ENCODE measurements at regions of chr7 and their contacts with region 1.

Region 1: DNA sequence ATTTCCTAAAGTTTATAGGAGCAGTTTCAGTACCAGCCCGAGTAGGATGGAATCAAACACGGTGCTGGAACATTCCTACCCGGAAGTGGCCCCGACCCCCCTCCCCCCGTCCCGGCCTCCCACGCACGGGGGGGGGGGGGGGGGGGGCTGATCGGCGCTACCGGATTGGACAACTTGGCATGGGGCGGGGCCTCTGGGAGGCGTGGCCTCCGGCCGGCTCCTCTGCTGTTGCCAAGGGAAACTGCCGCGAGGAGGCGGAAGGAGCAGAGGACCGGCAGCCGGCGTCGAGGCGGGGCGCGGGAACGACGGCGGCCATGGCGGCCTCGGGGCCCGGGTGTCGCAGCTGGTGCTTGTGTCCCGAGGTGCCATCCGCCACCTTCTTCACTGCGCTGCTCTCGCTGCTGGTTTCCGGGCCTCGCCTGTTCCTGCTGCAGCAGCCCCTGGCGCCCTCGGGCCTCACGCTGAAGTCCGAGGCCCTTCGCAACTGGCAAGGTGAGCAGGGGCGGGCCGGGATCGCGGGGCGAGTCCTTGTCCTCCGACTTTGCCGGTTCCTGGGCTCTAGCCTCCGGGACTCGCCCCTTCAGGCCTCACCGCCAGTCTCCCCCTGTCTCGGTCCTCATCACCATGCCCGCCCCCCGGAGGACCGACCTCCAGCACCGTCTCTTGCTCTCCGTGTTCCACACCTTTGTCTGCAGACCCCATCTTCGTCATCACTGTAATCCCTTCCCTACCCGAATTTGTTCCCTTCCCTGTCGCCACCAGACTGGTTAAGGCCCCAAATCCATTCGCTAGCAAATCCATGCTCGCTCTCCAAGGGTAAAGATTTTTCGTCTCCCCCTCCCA is at the start of gene RHBDD2:
- DNase-seq: peak; percentile 97
- H3K4me3 ChIP-seq: peak within 1 kb of the TSS; percentile 85
- H3K27ac ChIP-seq: peak within 1 kb of the TSS; percentile 43
- H3K4me1 ChIP-seq: peaks cover 18% of the 10 kb centered on the region
- CTCF ChIP-seq: no peak
- total RNA-seq, gene RHBDD2: 10.9 and 20.3 TPM in 2 replicates

Region 2: DNA sequence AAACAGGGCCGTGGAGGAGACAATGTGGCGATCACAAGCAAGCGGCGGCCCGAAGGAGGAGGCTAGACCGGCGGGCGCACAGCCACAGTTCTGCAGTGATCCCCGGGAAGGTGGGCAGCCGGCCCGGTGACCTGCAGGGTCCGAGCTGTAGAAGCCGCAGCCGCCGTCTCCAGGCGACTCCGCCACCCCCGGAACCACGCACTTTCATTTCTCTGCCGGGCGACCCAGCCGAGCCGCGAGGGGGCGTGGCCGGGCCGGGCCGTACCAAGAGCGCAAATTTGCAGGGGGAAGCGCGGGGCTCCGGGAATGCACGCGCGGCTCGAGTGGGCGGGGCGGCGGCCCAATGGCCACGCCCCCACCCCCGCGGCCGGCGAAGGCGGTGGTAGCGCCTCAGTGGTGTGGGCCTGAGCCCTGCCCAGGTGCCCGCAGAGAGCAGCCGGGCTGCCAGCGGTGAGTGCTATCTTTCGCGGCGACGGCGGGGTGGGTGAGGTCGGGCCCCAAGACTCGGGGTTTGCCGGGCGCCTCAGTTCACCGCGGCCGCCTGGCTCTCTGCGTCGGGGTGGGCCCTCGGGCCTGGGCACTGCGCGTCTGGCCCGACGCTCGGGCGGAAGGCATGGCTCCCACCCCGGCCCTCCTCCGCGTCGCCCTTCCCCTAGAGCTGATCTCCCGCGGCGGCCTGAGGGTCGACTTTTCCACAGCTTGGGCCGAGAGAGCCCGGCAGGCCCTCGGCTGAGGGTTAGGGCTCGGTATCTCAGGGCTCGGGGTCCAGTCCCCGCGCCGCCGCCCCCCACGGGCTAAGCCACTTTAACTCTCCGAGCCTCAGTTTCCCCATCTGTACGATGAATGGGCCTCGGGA is 36.0 kb after region 1 on chr7 and contains the start of gene POR:
- CTCF ChIA-PET with region 1: no interaction called
- POLR2A ChIA-PET with region 1: interaction called, 4 read pairs
- intact Hi-C with region 1: loop called (anchors 1 kb)
- DNase-seq: peak; percentile 93
- H3K4me3 ChIP-seq: peak within 1 kb of the TSS; percentile 98
- H3K27ac ChIP-seq: peak within 1 kb of the TSS; percentile 31
- H3K4me1 ChIP-seq: peaks cover 14% of the 10 kb centered on the region
- CTCF ChIP-seq: no peak
- total RNA-seq, gene POR: 30.8 and 41.5 TPM in 2 replicates

Region 3: DNA sequence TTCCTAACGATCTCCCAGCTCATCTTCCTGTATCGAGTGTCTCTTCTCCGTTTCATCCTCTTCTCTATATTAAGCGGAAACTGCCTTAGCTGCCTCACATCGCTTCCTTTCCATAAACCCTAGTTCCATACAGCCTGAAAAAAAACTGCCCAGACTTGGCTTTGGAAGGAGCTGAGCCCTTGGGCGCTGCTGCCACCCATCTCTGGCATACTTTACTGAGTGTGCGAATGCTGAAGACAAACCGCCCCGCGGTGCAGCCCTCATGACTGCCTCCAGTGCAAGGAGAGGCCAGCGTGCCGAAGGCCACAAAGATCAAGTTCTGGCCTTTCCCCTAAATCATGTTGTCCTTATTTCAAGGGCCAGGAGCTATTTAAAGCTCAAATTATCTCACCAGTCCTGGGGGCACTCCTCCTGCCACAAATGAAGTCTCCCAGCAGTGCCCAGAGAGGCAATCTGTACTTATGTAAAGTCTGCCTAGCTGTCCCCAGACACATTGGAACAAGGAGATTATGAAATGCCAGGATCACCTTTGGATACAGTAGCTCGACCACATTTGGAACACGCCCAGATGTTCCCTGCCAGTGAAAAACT is 454.6 kb after region 1 on chr7:
- CTCF ChIA-PET with region 1: no interaction called
- POLR2A ChIA-PET with region 1: no interaction called
- intact Hi-C with region 1: no loop called
- DNase-seq: no peak
- H3K4me3 ChIP-seq: no peak overlapping the region
- H3K27ac ChIP-seq: no peak overlapping the region
- H3K4me1 ChIP-seq: no peaks in the 10 kb centered on the region
- CTCF ChIP-seq: no peak

Measured in OCI-LY7 (cell line).